Calu3 (cell line): ENCODE measurements at regions of chr11 and their contacts with region 1.

Region 1: GRCh38 chr11:29333993-29334775 is 682.6 kb downstream of the KCNA4 start:
- DNase-seq: peak; percentile 10
- H3K4me3 Mint-ChIP-seq: no peak overlapping the region
- H3K27ac Mint-ChIP-seq: no peak overlapping the region
- H3K4me1 Mint-ChIP-seq: peaks cover 37% of the 10 kb centered on the region
- H3K27me3 Mint-ChIP-seq: no peaks in the 10 kb centered on the region
- CTCF ChIP-seq: peak; percentile 44

Region 2: GRCh38 chr11:27847496-27847895 is 1486.7 kb before region 1 on chr11:
- CTCF ChIA-PET with region 1: interaction called, 3 read pairs
- intact Hi-C with region 1: loop called (anchors 10 kb)
- DNase-seq: no peak
- H3K4me3 Mint-ChIP-seq: no peak overlapping the region
- H3K27ac Mint-ChIP-seq: no peak overlapping the region
- H3K4me1 Mint-ChIP-seq: peaks cover 10% of the 10 kb centered on the region
- H3K27me3 Mint-ChIP-seq: no peaks in the 10 kb centered on the region
- CTCF ChIP-seq: no peak

Region 3: GRCh38 chr11:28529540-28530410 is 804.4 kb before region 1 on chr11:
- CTCF ChIA-PET with region 1: no interaction called
- intact Hi-C with region 1: loop called (anchors 10 kb)
- DNase-seq: peak; percentile 22
- H3K4me3 Mint-ChIP-seq: no peak overlapping the region
- H3K27ac Mint-ChIP-seq: no peak overlapping the region
- H3K4me1 Mint-ChIP-seq: no peaks in the 10 kb centered on the region
- H3K27me3 Mint-ChIP-seq: no peaks in the 10 kb centered on the region
- CTCF ChIP-seq: peak; percentile 10

Region 4: DNA sequence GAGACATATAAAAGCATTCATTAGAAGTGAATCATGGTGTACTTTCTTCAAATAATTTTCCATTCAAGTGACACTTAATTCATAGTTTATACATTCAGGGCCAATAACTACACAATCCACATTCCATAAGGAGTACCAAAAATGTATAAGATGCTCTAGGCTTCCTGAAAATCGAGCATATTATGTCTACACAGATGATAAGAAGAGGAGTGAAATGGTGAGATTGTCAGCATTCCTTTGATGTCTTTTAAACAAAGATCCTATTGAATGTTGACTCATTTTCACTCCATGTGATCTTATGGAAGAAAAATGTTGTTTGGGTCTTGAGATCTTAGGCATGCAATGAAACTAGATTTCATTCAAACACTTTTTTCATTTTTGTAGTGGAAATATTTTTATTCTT is 160.5 kb before region 1 on chr11:
- CTCF ChIA-PET with region 1: no interaction called
- intact Hi-C with region 1: loop called (anchors 5 kb)
- DNase-seq: no peak
- H3K4me3 Mint-ChIP-seq: no peak overlapping the region
- H3K27ac Mint-ChIP-seq: peak overlapping the region; percentile 61
- H3K4me1 Mint-ChIP-seq: peaks cover 24% of the 10 kb centered on the region
- H3K27me3 Mint-ChIP-seq: no peaks in the 10 kb centered on the region
- CTCF ChIP-seq: no peak